Mammary epithelial cell (primary cell): ENCODE measurements at regions of chr7 and their contacts with region 1.

Region 1: GRCh38 chr7:220151-220841 is 27.9 kb downstream of the FAM20C start:
- DNase-seq: no peak
- H3K4me3 ChIP-seq: no peak overlapping the region
- H3K27ac ChIP-seq: no peak overlapping the region
- H3K4me1 ChIP-seq: peaks cover 17% of the 10 kb centered on the region
- H3K27me3 ChIP-seq: no peaks in the 10 kb centered on the region
- CTCF ChIP-seq: no peak

Region 2: DNA sequence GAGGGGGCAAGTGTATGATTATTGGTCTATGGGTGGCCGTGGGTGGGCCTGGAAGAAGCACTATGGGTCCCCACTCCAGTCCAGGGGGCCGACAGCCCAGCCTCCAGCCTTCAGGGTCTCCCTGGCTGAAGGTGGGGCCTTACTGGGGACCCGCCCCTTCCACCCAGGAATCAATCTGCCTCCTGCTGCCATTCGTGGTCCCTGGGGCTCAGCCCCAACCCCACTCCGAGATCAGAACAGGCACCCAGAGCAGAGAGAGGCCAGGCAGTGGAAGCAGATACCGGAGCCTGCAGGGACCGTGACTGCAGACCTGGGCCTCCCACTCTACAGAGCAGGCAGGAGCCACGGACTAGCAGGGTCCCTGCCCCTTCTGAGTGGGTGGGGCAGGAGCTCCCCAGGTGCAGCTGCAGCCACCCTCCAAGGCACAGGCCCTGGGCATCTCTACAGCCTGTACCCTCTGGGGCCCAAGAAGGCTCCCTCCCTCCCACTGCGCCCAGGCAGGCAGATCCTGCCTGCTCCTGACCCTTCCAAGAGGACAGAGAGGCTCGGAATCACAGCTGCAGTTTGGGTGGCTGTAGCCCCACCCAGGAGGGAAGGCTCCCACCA is 56.0 kb after region 1 on chr7:
- CTCF ChIA-PET with region 1: no interaction called
- dilution Hi-C with region 1: loop called (anchors 5 kb)
- in situ Hi-C with region 1: no loop called
- intact Hi-C with region 1: no loop called
- DNase-seq: no peak
- H3K4me3 ChIP-seq: no peak overlapping the region
- H3K27ac ChIP-seq: no peak overlapping the region
- H3K4me1 ChIP-seq: no peaks in the 10 kb centered on the region
- H3K27me3 ChIP-seq: no peaks in the 10 kb centered on the region
- CTCF ChIP-seq: no peak